ENCODE measurements at regions of chr2 and their contacts with region 1.

Region 1: GRCh38 chr2:57516698-57517340 is 529.8 kb upstream of the VRK2 start:
- DNase-seq: peak; percentile 36
- ATAC-seq: peak; percentile 69
- H3K4me3 ChIP-seq: no peak overlapping the region
- H3K27ac ChIP-seq: no peak overlapping the region
- H3K4me1 ChIP-seq: no peaks in the 10 kb centered on the region
- H3K27me3 ChIP-seq: no peaks in the 10 kb centered on the region
- CTCF ChIP-seq: peak; percentile 71
- EP300 ChIP-seq: no peak
- POLR2A ChIP-seq: no peak
- RAD21 ChIP-seq: peak; percentile 54; the same call in 1 of the 2 replicates

Region 2: DNA sequence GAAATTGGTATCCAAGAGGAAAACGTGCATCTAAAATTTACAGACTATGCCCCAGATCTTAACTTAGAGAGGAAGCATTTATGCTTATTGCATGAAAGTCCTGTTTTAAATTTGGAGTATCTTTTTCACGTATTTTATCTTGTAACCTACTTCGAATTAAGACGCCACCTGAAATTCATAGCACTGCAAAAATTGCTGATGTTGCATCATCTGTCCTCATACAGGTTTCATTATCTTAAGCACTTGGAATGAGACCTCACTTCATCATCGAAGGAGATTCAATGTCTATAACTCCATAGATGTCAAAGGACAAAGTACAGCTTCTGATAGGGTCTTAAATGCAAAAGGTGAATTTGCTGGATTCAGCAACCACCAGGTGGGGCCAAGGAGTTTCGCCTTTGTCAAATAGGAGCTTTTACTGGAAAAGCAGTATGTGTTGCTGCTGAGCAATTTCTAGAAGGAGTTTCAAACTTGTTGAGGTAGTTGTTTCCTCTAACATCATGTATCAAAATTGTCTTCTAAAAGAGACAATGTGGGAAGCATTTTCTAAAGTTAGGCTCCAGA is 1439.4 kb before region 1 on chr2:
- CTCF ChIA-PET with region 1: interaction called, 3 read pairs
- POLR2A ChIA-PET with region 1: no interaction called
- in situ Hi-C with region 1: no loop called
- intact Hi-C with region 1: loop called (anchors 2 kb)
- DNase-seq: peak; percentile 49
- ATAC-seq: peak; percentile 65
- H3K4me3 ChIP-seq: no peak overlapping the region
- H3K27ac ChIP-seq: no peak overlapping the region
- H3K4me1 ChIP-seq: no peaks in the 10 kb centered on the region
- H3K27me3 ChIP-seq: no peaks in the 10 kb centered on the region
- CTCF ChIP-seq: peak; percentile 67
- EP300 ChIP-seq: no peak
- POLR2A ChIP-seq: no peak
- RAD21 ChIP-seq: 0 out of 2 replicates have a peak, but pooled peaks have one; percentile 19

Region 3: GRCh38 chr2:56132138-56132537 is 1384.7 kb before region 1 on chr2:
- CTCF ChIA-PET with region 1: interaction called, 5 read pairs
- POLR2A ChIA-PET with region 1: no interaction called
- in situ Hi-C with region 1: no loop called
- intact Hi-C with region 1: loop called (anchors 1 kb)
- DNase-seq: peak; percentile 60
- ATAC-seq: peak; percentile 58
- H3K4me3 ChIP-seq: no peak overlapping the region
- H3K27ac ChIP-seq: no peak overlapping the region
- H3K4me1 ChIP-seq: no peaks in the 10 kb centered on the region
- H3K27me3 ChIP-seq: 0 out of 5 replicates have a peak, but pooled peaks cover 0 to 4% of the 10 kb centered on the region in 2 experiments
- CTCF ChIP-seq: peak; percentile 64
- EP300 ChIP-seq: no peak
- POLR2A ChIP-seq: no peak
- RAD21 ChIP-seq: 0 out of 2 replicates have a peak, but pooled peaks have one; percentile 33

Measured in HepG2 (cell line).